Posterior vena cava (tissue), 2 donors: ENCODE measurements at regions of chr2 and their contacts with region 1.

Region 1: DNA sequence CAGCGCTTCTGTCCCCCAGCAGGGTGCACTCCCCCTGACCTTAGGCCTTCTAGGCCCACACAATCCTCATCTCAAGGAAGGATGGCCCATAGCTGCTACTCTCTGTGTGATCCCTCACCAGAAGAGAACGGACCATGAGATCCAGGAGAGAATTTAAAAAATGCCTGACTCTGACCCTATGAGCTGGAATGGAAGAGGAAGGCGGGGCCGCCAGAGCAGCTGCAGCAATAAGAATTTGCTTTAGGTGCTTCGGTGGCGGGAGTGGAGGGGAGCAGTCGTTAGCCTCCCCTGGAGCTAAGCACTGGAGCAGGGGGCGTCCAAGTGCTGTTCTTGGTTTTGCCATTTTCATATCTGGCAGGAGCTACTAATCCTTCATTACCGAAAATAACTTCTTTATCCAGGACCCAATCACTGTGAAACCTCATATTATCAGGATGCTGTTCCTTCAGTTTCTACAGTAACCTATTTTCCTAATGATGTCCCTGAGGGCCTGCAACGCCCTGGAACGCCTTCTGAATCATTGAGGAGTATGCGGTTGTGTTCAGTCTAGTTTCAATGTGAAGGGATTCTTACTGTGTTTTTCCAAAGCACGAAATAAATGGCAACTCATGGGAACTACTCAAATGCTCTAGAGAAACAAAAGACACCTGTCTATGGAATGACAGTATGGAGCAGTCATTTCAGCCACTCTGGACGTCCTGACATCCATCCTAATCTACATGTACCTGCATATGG is 105.1 kb upstream of the SIX2 start:
- DNase-seq: no peak

Region 2: DNA sequence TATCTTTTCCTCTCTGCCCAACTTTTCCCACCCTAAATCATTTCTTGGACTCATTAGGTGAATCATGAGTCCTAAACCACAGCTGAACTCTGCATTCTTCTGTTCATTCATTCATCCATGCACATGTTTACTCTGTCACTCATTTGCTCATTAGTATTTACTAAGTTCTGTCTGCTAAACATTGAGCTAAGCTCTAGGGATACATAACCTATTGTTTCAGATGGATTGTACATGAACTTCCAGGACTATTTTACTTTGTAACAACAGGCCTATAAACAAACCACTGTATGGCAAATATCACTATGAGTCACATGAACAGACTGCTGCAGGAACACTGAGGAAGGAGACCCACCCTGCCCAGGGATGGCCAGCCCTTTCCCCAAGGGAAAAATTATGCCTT is 1355.2 kb before region 1 on chr2:
- intact Hi-C with region 1: no loop called
- DNase-seq: no peak

Region 3: GRCh38 chr2:45102141-45102540 is 12.2 kb before region 1 on chr2:
- intact Hi-C with region 1: no loop called
- DNase-seq: no peak

Region 4: DNA sequence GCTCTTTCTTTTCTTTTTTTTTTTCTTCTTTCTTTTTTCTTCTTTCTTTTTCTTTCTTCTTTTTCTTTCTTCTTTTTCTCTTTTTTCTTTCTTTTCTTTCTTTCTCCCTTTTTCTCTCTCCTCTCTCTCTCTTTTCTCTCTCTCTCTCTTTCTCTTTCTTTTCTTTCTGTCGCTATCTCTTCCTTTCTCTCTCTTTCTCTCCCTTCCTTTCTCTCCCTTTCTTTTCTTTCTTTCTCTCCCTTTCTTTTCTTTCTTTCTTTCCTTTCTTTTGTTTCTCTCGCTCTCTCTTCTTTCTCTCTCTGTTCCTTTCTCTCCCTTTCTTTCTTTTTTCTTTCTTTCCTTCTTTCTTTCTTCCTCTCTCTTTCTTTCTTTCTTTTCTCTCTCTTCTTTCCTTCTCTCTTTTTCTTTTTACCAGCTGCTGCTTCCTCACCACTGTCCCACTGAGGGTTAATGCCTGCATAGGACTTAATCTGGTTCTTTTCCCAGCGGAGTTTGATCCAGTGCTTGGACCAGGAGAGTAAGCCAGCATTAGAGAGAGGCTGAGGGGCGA is 40.3 kb after region 1 on chr2:
- intact Hi-C with region 1: loop called in 1 of 2 experiments (anchors 1 kb)
- DNase-seq: no peak